ENCODE measurements at regions of chr3 and their contacts with region 1.

Region 1: DNA sequence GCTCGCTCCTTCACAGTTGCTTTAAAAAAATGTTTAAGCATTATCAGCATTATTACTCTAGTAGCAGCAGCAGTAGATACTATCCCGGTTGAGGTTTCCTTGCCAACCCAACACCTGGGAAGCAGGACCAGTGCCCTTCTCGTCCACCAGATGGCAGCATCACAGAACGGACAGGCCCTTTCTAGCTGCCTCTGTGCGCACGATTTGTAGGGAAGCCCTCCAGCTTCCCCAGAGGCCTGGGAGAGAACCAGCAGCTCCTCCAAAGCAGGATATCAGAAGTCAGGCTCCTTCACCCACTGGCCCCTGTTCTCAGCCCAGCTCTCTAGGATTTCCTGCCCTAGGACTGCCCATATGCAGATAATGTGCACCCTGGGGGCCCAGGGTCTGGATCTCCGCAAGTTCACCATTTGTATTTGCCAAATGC is 16.8 kb upstream of the ESYT3 start:
- DNase-seq: peak; percentile 79 to 93
- H3K4me3 ChIP-seq: no peak overlapping the region
- H3K27ac ChIP-seq: no peak overlapping the region
- H3K4me1 ChIP-seq: peaks cover 0 to 3% (median 1%) of the 10 kb centered on the region in 4 experiments; a peak in 4 of 7 replicates
- H3K27me3 ChIP-seq: no peaks in the 10 kb centered on the region
- CTCF ChIP-seq: peak; percentile 97 to 99 (median 99)
- EP300 ChIP-seq: no peak
- POLR2A ChIP-seq: no peak
- RAD21 ChIP-seq: peak; percentile 88 to 90

Region 2: GRCh38 chr3:138329127-138329983 is 88.2 kb before region 1 on chr3 and contains the start of gene NME9:
- CTCF ChIA-PET with region 1: interaction called, 47 read pairs
- POLR2A ChIA-PET with region 1: no interaction called
- DNase-seq: peak; percentile 93 to 99
- H3K4me3 ChIP-seq: peak within 1 kb of the TSS; percentile 41 to 83 (median 79)
- H3K27ac ChIP-seq: no peak within 1 kb of the TSS
- H3K4me1 ChIP-seq: peaks cover 0 to 4% (median 2%) of the 10 kb centered on the region in 4 experiments; a peak in 2 of 7 replicates
- H3K27me3 ChIP-seq: no peaks in the 10 kb centered on the region
- CTCF ChIP-seq: peak; percentile 62 to 79 (median 75)
- EP300 ChIP-seq: no peak
- POLR2A ChIP-seq: no peak
- RAD21 ChIP-seq: peak; percentile 47 to 65
- total RNA-seq, gene NME9: not detected in 2 replicates

Region 3: DNA sequence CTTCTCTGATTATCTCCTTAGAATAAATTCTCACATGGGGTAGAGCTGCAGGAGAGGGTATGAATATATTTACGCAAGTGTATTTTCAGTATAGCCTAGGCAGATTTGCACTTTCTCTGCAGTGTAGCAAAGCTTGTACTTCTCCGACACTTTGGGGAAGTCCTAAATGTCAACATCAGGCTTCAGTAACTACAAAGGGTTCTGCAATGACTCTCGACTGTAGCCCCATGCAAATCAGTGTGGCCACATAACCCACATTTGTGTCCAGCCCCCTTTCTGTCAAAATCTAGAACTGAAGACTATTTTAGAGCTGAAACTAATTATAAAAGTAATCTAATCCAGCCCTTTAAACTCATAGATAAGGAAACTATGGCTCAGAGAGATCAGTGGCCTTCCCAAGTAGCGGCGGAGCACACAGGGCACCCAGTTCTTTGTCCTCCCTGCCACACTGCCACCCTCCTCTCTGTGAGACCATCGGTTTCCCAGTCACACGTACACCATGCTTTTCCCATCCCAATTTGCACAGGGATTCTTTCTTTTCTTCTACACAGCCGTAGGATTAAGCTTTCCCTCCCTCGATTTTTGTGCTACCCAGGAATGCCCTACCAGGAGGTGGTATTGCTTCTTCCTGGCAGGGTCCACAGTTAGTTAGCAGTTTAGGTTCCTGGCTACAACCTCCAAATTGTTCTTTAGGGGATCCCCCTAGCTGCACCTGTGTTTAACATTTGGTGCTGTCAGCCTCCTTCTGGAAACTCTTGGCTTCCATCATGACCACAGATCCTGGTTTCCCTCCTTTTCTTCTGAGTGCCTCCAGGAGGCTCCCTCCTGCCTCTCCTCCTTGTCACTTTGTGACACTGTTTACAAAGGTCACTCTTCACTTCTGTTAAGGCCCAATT is 46.3 kb before region 1 on chr3:
- CTCF ChIA-PET with region 1: interaction called, 25 read pairs
- POLR2A ChIA-PET with region 1: no interaction called
- DNase-seq: no peak
- H3K4me3 ChIP-seq: no peak overlapping the region
- H3K27ac ChIP-seq: no peak overlapping the region
- H3K4me1 ChIP-seq: no peaks in the 10 kb centered on the region
- H3K27me3 ChIP-seq: no peaks in the 10 kb centered on the region
- CTCF ChIP-seq: no peak
- EP300 ChIP-seq: no peak
- POLR2A ChIP-seq: no peak
- RAD21 ChIP-seq: peak in 1 of 2 experiments; percentile 16; a peak in 1 of 4 replicates

Region 4: DNA sequence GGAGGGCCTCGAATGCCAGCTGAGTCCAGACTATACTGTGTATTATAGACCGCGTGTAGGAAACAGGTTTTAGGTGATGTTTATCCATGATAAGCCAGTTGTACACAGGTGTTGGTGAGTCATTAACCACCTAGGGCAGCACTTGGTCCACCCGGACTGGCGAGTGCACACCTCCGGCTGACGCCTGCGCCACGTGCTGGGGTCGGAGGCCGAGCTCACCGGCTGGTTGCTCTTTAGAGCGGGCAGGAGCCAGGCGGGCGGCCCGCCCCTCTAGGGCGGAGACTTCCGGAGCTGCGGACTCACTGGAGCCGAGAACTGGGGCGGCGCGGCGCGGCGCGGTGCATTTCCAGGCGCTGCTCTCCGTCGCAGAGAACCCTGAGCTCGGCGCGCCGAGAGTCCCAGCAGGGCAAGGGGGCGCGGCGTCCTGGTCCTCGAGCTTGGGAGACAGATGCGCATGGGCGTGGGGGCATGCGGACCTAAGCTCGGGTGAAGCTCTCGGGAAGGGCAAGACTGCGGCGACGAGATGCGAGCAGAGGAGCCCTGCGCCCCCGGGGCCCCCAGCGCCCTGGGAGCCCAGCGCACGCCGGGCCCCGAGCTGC is 16.8 kb after region 1 on chr3 and contains the start of gene ESYT3:
- CTCF ChIA-PET with region 1: interaction called, 31 read pairs
- POLR2A ChIA-PET with region 1: interaction called, 8 read pairs
- DNase-seq: peak; percentile 34 to 86
- H3K4me3 ChIP-seq: peak within 1 kb of the TSS; percentile 47 to 66 (median 56)
- H3K27ac ChIP-seq: no peak within 1 kb of the TSS
- H3K4me1 ChIP-seq: peaks cover 0 to 9% (median 6%) of the 10 kb centered on the region in 4 experiments; a peak in 5 of 7 replicates
- H3K27me3 ChIP-seq: peaks cover 19 to 45% (median 36%) of the 10 kb centered on the region in 4 experiments
- CTCF ChIP-seq: no peak
- EP300 ChIP-seq: no peak
- POLR2A ChIP-seq: no peak
- RAD21 ChIP-seq: no peak
- total RNA-seq, gene ESYT3: 7.0 and 7.3 TPM in 2 replicates

Region 5: DNA sequence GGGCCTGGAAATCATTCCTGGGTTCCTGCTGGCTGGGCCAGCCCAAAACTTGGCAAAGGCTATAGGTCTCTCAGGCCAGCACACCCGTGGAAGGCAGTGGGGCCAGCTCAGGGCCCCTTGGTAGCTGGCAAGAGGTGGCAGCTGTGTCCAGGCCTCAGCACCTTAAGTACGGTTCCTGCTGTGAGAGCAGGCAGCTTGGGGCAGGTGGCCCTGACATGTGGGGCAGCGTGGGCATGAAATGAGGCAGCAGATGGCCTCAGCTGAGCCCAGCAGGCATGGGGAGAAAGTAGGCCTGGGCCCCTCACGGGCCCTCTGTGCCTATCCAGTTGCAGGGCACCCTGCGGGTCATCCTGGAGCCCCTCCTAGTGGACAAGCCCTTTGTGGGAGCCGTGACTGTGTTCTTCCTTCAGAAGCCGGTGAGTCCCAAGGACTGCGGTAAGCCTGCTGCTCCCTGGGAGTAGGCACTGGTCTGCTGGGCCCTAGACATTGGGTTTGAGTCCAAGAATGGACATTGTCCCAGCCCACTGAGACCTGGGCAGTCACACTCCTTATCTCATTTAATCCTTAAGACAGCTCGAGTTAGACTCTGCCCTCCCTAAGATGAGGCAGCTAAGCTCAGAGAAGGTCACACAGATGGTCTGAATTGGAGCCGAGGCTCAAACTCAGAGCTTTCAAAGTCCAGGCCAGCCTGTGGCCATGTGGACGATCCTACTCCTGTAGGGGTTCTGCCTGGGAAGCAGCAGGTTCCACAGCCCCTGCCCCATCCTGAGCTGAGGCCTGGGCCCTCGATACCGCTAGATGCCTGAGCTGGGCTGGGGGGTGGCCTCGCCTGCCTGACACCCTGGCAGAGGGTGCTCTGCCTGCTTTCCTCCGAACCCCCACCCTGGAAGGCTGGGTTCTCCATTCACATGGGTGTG is 42.3 kb after region 1 on chr3:
- CTCF ChIA-PET with region 1: interaction called, 21 read pairs
- POLR2A ChIA-PET with region 1: no interaction called
- DNase-seq: peak in 1 of 2 experiments; percentile 42
- H3K4me3 ChIP-seq: no peak overlapping the region
- H3K27ac ChIP-seq: no peak overlapping the region
- H3K4me1 ChIP-seq: no peaks in the 10 kb centered on the region
- H3K27me3 ChIP-seq: no peaks in the 10 kb centered on the region
- CTCF ChIP-seq: peak in 2 of 3 experiments; percentile 8 to 24; a peak in 2 of 4 replicates
- EP300 ChIP-seq: no peak
- POLR2A ChIP-seq: no peak
- RAD21 ChIP-seq: peak in 1 of 2 experiments; percentile 45; a peak in 2 of 4 replicates

Region 6: GRCh38 chr3:138600100-138600745 is 182.7 kb after region 1 on chr3:
- CTCF ChIA-PET with region 1: no interaction called
- POLR2A ChIA-PET with region 1: no interaction called
- DNase-seq: no peak
- H3K4me3 ChIP-seq: no peak overlapping the region
- H3K27ac ChIP-seq: no peak overlapping the region
- H3K4me1 ChIP-seq: no peaks in the 10 kb centered on the region
- H3K27me3 ChIP-seq: no peaks in the 10 kb centered on the region
- CTCF ChIP-seq: no peak
- EP300 ChIP-seq: no peak
- POLR2A ChIP-seq: no peak
- RAD21 ChIP-seq: no peak